Activated CD4-positive, alpha-beta T cell treated with anti-CD3 and anti-CD28 coated beads, Interleukin-2, amount 10 ng/mL, durations not matched to agents 24 days and 14 days (primary cell): ENCODE measurements at regions of chr14 and their contacts with region 1.

Region 1: DNA sequence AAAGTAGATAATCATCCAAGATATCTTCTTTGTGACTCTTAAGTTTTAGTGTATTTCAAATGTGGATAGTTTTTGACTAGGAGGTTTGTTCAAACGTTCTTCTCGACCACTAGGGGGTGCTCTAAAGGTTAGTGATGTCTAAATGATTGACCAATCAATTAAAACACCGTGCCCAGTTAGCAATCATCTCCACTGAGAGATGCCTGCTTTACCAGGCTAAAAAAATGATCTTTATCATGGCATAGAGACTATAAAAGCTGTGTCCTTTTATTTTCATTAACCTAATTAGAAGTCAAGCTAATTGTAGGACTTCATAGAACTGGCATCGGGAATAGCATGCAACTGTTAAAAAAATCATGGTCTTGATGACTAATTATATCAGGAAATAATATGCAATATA is 153.9 kb downstream of the PRKCH start:
- DNase-seq: peak; percentile 79
- H3K4me3 Mint-ChIP-seq: peak overlapping the region; percentile 39
- H3K27ac Mint-ChIP-seq: peak overlapping the region; percentile 87
- H3K4me1 Mint-ChIP-seq: peaks cover 85% of the 10 kb centered on the region
- H3K27me3 Mint-ChIP-seq: no peaks in the 10 kb centered on the region

Region 2: DNA sequence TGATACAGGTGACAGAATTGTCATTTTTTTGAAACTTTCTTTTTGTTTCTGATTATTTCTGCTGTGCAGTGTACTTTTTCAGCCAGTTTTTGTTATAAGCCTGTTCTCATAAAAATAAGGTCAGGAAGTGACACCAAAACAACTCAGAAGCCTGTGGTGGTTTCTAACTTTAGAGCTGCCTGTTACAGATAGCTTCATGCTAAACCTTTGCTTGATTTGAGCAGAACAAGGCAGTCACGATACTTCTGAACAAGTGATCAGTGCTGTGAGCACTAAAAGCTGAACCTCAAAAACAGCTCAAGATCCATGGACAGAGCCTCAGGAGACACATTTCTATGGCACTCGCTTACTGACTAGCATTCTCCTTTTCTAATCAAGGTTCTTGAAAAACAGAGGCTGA is 71.9 kb before region 1 on chr14:
- intact Hi-C with region 1: no loop called
- DNase-seq: peak; percentile 85
- H3K4me3 Mint-ChIP-seq: peak overlapping the region; percentile 71
- H3K27ac Mint-ChIP-seq: peak overlapping the region; percentile 90
- H3K4me1 Mint-ChIP-seq: peaks cover 65% of the 10 kb centered on the region
- H3K27me3 Mint-ChIP-seq: no peaks in the 10 kb centered on the region

Region 3: DNA sequence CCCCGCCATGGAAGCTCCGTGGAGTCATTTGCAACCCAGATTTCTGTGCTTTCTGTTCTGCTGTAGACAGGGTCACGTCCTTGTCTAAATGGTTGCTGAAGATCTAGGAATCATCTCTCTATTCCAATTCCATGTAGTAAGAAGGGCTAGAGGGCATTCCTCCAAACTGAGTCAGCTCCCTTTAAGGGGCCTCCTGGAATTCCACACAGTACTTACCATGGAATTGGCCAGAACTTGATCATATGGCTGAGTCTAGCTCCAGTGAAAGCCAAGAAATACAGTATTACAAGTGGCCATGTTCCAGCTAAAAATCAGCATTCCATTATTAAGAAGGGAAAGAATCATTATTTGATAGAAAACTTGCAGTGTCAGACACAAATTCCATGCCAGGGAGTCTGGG is 17.9 kb after region 1 on chr14:
- intact Hi-C with region 1: no loop called
- DNase-seq: no peak
- H3K4me3 Mint-ChIP-seq: no peak overlapping the region
- H3K27ac Mint-ChIP-seq: no peak overlapping the region
- H3K4me1 Mint-ChIP-seq: peaks cover 26% of the 10 kb centered on the region
- H3K27me3 Mint-ChIP-seq: no peaks in the 10 kb centered on the region

Region 4: DNA sequence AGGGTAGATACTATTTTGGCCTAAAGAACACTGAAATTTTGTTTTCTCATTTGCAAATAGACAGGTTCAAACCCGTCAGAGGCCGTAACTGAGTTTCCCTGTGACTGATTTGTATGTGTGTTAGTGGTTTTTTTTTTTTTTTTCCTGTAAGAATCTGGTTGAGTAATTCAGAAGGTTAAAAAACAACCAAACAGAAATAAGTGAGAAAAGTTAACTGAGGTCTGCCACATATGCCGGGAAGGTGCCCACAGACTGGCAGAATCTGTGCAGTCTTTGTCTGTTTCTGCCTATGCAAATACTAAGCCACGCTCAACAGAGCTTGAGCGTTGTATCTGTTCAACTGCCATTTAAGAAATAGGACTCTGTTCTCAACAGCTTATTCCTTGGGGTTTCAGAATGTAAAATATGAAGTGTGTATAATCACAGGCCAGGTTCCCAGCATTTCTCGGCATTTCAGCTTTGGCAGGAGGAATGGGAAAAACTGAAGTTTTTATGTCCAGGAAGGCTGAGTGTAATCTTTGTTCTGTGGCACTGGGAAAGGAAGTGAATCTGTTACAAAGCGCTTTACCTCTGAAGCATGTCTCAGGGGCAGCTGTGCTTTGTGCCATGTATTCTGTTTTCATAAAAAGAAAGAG is 28.0 kb after region 1 on chr14:
- intact Hi-C with region 1: loop called (anchors 1 kb)
- DNase-seq: peak; percentile 84
- H3K4me3 Mint-ChIP-seq: peak overlapping the region; percentile 76
- H3K27ac Mint-ChIP-seq: peak overlapping the region; percentile 95
- H3K4me1 Mint-ChIP-seq: peaks cover 79% of the 10 kb centered on the region
- H3K27me3 Mint-ChIP-seq: no peaks in the 10 kb centered on the region

Region 5: DNA sequence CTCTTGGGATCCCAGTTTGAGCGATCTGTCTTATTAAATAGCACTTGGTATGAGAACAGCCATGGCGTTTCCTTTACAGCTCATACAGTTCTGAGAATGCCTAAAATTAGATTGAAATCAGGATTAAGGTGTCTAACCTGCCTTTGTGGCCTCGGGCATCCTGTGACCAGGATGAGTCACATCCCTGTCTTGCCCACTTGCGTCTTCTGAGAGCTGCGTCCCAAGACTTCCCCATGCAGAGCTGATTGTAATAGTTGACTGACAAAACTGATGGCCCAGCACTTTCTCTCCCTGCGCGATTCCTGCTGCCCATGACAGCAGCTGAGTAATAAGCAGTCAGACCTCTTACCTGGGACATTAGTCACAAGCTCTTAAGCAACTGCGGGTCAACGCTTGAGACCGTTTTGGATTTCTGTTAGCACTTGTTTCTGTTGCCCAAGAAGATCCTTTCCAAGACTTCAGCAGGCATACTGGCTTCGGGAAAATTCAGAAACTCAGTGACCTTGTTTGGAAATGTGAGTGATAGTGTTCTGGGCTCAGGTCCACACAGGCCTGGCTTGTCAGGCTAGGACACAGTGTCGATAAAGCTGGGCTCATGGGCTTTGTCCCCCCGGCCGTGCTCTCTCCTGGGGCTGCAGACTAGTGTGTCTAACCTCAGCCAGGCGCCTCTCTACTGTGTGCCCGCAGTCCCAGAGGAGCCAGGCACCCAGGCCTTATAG is 50.1 kb after region 1 on chr14:
- intact Hi-C with region 1: loop called (anchors 1 kb)
- DNase-seq: peak; percentile 87
- H3K4me3 Mint-ChIP-seq: peak overlapping the region; percentile 66
- H3K27ac Mint-ChIP-seq: peak overlapping the region; percentile 65
- H3K4me1 Mint-ChIP-seq: peaks cover 77% of the 10 kb centered on the region
- H3K27me3 Mint-ChIP-seq: no peaks in the 10 kb centered on the region

Region 6: DNA sequence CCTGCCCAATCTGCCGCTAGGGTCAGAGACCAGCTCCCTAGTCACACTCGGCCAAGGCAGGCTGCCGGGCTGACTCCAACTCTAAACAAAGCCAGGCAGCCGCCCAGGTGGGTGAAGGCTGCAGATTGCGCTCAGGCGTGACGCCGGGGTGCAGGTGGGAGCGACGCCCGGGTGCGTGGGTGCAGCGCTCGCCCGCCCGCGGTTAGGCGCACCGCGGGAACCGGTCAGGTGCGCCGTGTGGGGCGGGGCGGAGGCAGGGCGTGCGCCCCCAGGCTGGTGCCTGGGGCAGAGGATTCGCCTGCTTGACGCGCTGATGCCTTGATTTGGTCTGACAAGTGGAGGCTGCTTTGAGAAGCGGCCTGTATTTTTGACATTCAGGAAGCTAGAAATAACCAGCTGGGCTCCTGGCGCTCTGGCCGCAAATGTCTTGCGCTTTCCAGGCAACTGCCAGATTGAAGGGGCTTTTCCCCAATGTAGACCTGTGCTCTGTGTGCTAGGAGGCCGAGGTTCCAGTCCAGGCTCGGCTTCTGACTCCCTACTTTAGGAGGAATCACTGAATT is 93.3 kb after region 1 on chr14:
- intact Hi-C with region 1: loop called (anchors 10 kb)
- DNase-seq: peak; percentile 88
- H3K4me3 Mint-ChIP-seq: peak overlapping the region; percentile 77
- H3K27ac Mint-ChIP-seq: peak overlapping the region; percentile 56
- H3K4me1 Mint-ChIP-seq: peaks cover 77% of the 10 kb centered on the region
- H3K27me3 Mint-ChIP-seq: peaks cover 4% of the 10 kb centered on the region

Region 7: GRCh38 chr14:61620130-61620946 is 145.0 kb after region 1 on chr14:
- intact Hi-C with region 1: loop called (anchors 1 kb)
- DNase-seq: peak; percentile 69
- H3K4me3 Mint-ChIP-seq: peak overlapping the region; percentile 39
- H3K27ac Mint-ChIP-seq: peak overlapping the region; percentile 74
- H3K4me1 Mint-ChIP-seq: peaks cover 34% of the 10 kb centered on the region
- H3K27me3 Mint-ChIP-seq: no peaks in the 10 kb centered on the region

Region 8: GRCh38 chr14:61730756-61731373 is 255.5 kb after region 1 on chr14:
- intact Hi-C with region 1: loop called (anchors 2 kb)
- DNase-seq: no peak
- H3K4me3 Mint-ChIP-seq: no peak overlapping the region
- H3K27ac Mint-ChIP-seq: peak overlapping the region; percentile 9
- H3K4me1 Mint-ChIP-seq: peaks cover 56% of the 10 kb centered on the region
- H3K27me3 Mint-ChIP-seq: no peaks in the 10 kb centered on the region

Region 9: GRCh38 chr14:61750708-61751474 is 275.6 kb after region 1 on chr14:
- intact Hi-C with region 1: loop called (anchors 2 kb)
- DNase-seq: peak; percentile 97
- H3K4me3 Mint-ChIP-seq: peak overlapping the region; percentile 98
- H3K27ac Mint-ChIP-seq: peak overlapping the region; percentile 94
- H3K4me1 Mint-ChIP-seq: peaks cover 49% of the 10 kb centered on the region
- H3K27me3 Mint-ChIP-seq: no peaks in the 10 kb centered on the region